ENCODE measurements at regions of chr4 and their contacts with region 1.

Region 1: GRCh38 chr4:109977854-109978501 is 65.3 kb downstream of the EGF start:
- DNase-seq: no peak
- H3K4me3 ChIP-seq: no peak overlapping the region
- H3K27ac ChIP-seq: no peak overlapping the region
- H3K4me1 ChIP-seq: no peaks in the 10 kb centered on the region
- H3K27me3 ChIP-seq: no peaks in the 10 kb centered on the region
- CTCF ChIP-seq: peak; percentile 55 to 72 (median 64)
- EP300 ChIP-seq: no peak
- POLR2A ChIP-seq: no peak

Region 2: DNA sequence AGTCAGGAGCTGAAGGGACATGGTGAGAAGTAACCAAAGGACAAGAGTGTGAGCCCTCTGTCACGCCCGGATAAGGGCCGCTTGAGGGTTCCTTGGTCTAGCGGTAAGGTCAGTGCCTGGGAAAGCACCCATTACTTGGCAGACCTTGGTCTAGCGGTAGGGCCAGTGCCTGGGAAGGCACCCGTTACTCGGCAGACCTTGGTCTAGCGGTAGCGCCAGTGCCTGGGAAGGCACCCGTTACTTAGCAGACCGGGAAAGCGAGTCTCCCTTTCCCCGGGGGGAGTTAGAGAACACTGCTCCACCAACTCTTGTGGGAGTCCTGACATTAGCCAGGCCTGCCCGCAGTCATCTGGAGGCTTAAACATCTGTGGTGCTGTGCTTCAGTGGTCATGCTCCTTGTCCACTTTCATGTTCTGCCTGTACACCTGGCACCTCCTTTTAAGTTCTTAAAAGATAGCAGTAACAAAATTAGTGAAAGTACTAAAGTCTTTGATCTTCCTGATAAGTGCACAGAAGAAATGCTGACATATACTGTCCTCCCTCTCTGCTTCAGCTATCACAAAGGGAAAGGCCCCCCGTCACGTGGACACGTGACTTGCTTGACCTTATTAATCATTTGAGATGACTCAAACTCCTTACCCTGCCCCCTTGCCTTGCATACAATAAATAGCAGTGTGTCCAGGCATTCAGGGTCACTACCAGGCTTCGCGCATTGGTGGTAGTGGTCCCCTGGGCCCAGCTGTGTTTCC is 553.7 kb before region 1 on chr4:
- intact Hi-C with region 1: loop called (anchors 5 kb)
- DNase-seq: no peak
- H3K4me3 ChIP-seq: no peak overlapping the region
- H3K27ac ChIP-seq: no peak overlapping the region
- H3K4me1 ChIP-seq: peaks cover 0 to 6% (median 5%) of the 10 kb centered on the region in 4 donors
- H3K27me3 ChIP-seq: no peaks in the 10 kb centered on the region
- CTCF ChIP-seq: no peak
- EP300 ChIP-seq: no peak
- POLR2A ChIP-seq: no peak

Region 3: DNA sequence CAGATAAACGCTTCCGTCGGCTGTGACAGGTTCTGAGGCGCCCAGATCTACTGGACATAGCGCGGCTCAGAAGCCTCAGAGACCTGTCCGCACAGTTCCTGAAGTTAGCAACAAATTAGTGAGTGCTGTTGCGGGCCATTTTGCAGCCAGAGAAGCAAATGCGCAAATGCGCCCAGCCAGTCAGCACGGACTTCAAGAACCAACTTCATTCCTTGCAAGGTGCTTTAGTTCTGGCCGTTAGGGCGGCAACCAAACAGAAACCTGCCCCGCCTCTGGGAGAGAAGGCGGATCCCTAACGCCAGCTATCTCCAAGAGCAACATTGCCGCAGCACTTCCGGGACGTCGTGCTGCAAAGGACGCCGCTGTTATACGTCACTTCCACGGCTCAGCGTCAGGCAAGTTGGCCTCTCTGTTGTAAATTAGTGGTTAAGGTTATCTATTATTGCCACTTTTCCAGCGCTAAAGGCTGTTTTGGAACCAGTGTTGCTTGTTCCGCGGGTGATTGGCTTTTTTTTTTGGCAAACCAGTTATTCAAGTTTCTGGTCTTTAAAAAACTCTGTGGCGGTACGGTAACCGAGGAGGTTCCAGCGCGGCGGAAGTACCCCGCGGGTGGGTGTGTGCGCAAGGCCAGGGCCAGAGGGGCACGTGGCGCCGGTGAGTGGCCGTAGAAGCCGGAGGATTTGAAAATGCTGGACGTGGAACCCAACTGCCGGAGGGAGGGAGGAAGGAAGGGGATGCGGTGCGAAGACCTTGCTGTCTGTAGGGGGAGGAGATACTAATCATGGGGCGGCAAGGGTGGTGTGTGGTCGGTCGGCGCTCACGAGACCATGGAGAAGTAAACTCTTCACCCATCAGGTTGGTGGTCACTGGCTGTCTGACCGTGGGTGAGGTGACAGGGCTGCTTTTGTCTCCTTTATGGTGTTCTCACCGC is 162.6 kb before region 1 on chr4 and contains the start of gene GAR1:
- intact Hi-C with region 1: loop called (anchors 5 kb)
- DNase-seq: peak; percentile 98
- H3K4me3 ChIP-seq: peak within 1 kb of the TSS; percentile 73 to 89 (median 83)
- H3K27ac ChIP-seq: peak within 1 kb of the TSS; percentile 82 to 90 (median 85)
- H3K4me1 ChIP-seq: peaks cover 7 to 25% (median 17%) of the 10 kb centered on the region in 4 donors
- H3K27me3 ChIP-seq: no peaks in the 10 kb centered on the region
- CTCF ChIP-seq: no peak
- EP300 ChIP-seq: no peak
- POLR2A ChIP-seq: no peak
- total RNA-seq, gene GAR1: 6.2 to 9.1 (median 7.7) TPM

Measured in esophagus muscularis mucosa (tissue), 4 donors.